A673 (cell line): ENCODE measurements at regions of chr2 and their contacts with region 1.

Region 1: GRCh38 chr2:183248866-183249567 is 124.8 kb downstream of the NUP35 start:
- DNase-seq: peak; percentile 60
- H3K4me3 ChIP-seq: no peak overlapping the region
- H3K27ac ChIP-seq: no peak overlapping the region
- H3K4me1 ChIP-seq: peaks cover 3% of the 10 kb centered on the region
- H3K27me3 ChIP-seq: no peaks in the 10 kb centered on the region
- CTCF ChIP-seq: peak; percentile 70

Region 2: DNA sequence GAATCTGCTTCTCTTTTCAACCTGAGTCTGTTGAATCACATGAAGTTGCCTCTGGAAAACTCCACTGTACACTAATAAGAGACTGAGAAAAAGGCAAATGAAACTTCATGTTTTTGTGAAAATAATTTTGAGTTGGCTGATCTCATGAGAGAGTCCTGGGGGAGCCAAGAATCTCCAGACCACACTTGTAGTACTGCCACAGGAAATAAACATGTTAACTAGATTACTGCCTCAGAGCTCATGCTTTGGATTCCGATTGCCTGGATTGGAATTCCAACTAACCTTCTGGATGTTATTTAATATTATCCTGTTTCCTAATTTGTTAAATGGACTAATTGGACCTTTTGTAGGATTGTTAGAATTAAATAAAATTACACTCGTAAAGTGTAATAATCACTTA is 99.5 kb before region 1 on chr2:
- CTCF ChIA-PET with region 1: no interaction called
- POLR2A ChIA-PET with region 1: no interaction called
- intact Hi-C with region 1: no loop called
- DNase-seq: peak; percentile 18
- H3K4me3 ChIP-seq: no peak overlapping the region
- H3K27ac ChIP-seq: no peak overlapping the region
- H3K4me1 ChIP-seq: peaks cover 5% of the 10 kb centered on the region
- H3K27me3 ChIP-seq: no peaks in the 10 kb centered on the region
- CTCF ChIP-seq: no peak

Region 3: DNA sequence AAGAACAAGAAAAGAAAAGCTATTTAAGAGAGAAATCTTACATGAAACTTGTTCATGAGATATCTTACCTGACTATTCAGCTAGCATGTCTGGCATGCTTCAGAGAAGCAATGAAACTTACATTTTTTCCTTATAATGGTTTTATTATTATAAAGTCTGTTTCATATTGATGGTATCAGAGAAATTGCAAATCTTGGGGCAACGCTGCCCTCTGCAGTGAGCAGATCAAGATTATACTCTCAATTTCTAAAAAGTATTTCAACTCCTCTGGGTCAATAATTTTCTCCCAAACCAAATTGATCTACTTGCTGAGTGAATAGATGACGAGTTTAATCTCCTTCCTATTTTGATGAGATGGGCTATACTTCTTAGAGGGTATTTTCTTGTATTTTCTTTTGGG is 110.8 kb after region 1 on chr2:
- CTCF ChIA-PET with region 1: interaction called, 11 read pairs
- POLR2A ChIA-PET with region 1: no interaction called
- intact Hi-C with region 1: loop called (anchors 2 kb)
- DNase-seq: peak; percentile 29
- H3K4me3 ChIP-seq: no peak overlapping the region
- H3K27ac ChIP-seq: no peak overlapping the region
- H3K4me1 ChIP-seq: no peaks in the 10 kb centered on the region
- H3K27me3 ChIP-seq: no peaks in the 10 kb centered on the region
- CTCF ChIP-seq: peak; percentile 49

Region 4: DNA sequence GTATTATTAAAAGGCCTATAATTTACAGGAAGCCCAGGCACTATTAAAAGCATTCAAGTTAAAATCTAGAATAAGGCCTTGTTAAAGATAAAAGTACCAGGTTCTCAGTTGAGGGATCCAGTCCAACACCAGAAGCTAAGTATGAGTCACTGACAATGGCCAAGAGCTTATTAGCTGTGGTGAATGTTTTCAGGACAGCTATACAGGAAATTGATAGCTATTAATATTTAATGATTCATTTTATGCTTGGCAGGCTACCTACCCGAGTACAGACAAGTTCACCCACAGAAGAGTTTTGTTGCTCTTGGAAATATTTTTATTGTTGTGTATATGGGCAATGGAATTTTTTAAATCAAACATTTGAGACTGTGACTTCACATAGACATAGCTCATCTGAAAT is 619.7 kb after region 1 on chr2:
- CTCF ChIA-PET with region 1: no interaction called
- POLR2A ChIA-PET with region 1: no interaction called
- intact Hi-C with region 1: loop called (anchors 10 kb)
- DNase-seq: peak; percentile 46
- H3K4me3 ChIP-seq: no peak overlapping the region
- H3K27ac ChIP-seq: no peak overlapping the region
- H3K4me1 ChIP-seq: peaks cover 7% of the 10 kb centered on the region
- H3K27me3 ChIP-seq: no peaks in the 10 kb centered on the region
- CTCF ChIP-seq: no peak

Region 5: DNA sequence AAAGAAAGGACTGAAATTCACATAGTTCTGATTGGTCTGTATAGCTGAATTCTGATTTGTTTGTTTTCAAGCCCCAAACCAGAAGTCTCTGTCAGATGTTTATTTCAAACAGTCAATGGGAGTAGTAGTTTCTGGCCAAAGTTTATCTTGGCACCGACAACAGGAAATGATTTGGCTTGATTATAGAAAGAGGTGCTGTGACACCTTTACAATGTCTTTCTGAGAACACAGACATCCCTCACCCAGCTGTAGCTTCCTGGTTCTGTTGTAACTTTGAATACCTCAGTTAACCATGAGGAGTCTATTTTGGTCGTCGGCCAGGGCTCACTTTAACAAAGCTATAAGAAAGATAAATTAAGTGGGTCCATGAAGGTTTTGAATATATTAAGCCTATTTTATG is 804.3 kb after region 1 on chr2:
- CTCF ChIA-PET with region 1: no interaction called
- POLR2A ChIA-PET with region 1: no interaction called
- intact Hi-C with region 1: loop called (anchors 10 kb)
- DNase-seq: no peak
- H3K4me3 ChIP-seq: no peak overlapping the region
- H3K27ac ChIP-seq: no peak overlapping the region
- H3K4me1 ChIP-seq: no peaks in the 10 kb centered on the region
- H3K27me3 ChIP-seq: no peaks in the 10 kb centered on the region
- CTCF ChIP-seq: no peak